Tibial artery (tissue), 4 donors: ENCODE measurements at regions of chr6 and their contacts with region 1.

Region 1: DNA sequence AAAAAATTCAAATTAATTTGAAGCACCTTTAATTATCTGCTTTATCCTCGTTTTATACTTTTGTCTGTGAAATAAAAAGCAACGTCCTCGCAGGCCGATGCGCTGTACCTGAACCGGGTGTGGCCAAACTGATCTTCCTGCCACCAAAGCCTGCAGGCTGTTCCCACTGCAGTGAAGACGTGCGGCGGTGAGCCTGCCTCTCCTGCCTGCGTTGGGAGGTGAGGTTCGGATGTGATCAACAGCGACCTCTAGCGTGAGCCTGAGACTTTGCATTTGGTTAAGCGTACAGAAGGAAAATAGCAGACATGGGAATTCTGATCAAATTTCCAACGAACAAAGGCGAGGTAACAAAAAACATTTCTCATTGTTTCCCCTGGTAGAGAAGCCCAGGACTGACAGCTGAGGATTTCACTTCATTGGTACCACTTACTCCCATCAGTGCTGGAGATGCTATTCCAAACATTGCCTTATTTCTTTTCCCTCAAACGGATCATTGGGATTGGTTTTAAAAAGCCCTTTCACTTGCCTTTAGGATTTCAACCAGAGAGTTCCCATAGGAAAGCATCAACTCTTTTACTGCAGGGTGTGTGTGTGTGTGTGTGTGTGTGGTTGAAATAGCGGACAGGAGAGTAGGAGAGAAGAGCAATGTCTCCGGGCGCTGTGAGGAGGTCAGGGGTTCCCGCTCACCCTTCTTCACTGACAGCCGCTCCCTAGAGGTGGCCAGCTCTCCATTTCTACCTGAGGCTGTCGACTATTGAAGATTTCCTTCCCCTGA is 56.6 kb upstream of the CCN6 start:
- DNase-seq: peak; percentile 79 to 85
- H3K4me3 ChIP-seq: peak overlapping the region; percentile 10 to 28
- H3K27ac ChIP-seq: peak overlapping the region in 1 of 2 donors; percentile 33
- H3K4me1 ChIP-seq: peaks cover 0 to 4% (median 0%) of the 10 kb centered on the region in 4 donors
- H3K27me3 ChIP-seq: peaks cover 0 to 8% of the 10 kb centered on the region in 2 donors
- CTCF ChIP-seq: peak; percentile 85 to 90

Region 2: GRCh38 chr6:111259089-111259831 is 738.0 kb before region 1 on chr6:
- intact Hi-C with region 1: loop called (anchors 5 kb)
- DNase-seq: peak; percentile 99
- H3K4me3 ChIP-seq: peak overlapping the region; percentile 62 to 87
- H3K27ac ChIP-seq: peak overlapping the region; percentile 79 to 85
- H3K4me1 ChIP-seq: peaks cover 0 to 23% (median 14%) of the 10 kb centered on the region in 4 donors
- H3K27me3 ChIP-seq: no peaks in the 10 kb centered on the region
- CTCF ChIP-seq: peak; percentile 95 to 97

Region 3: GRCh38 chr6:111709615-111710398 is 287.5 kb before region 1 on chr6:
- intact Hi-C with region 1: loop called (anchors 5 kb)
- DNase-seq: peak; percentile 68 to 82
- H3K4me3 ChIP-seq: no peak overlapping the region
- H3K27ac ChIP-seq: no peak overlapping the region
- H3K4me1 ChIP-seq: peaks cover 0 to 9% (median 2%) of the 10 kb centered on the region in 4 donors
- H3K27me3 ChIP-seq: no peaks in the 10 kb centered on the region
- CTCF ChIP-seq: peak; percentile 68 to 88

Region 4: GRCh38 chr6:111873178-111874024 is 123.9 kb before region 1 on chr6 and contains the start of gene FYN:
- intact Hi-C with region 1: loop called (anchors 10 kb)
- DNase-seq: peak; percentile 98
- H3K4me3 ChIP-seq: peak within 1 kb of the TSS; percentile 67 to 80
- H3K27ac ChIP-seq: peak within 1 kb of the TSS; percentile 65 to 69
- H3K4me1 ChIP-seq: peaks cover 0 to 20% (median 12%) of the 10 kb centered on the region in 4 donors
- H3K27me3 ChIP-seq: peaks cover 0 to 6% of the 10 kb centered on the region in 2 donors
- CTCF ChIP-seq: peak; percentile 49 to 63

Region 5: GRCh38 chr6:111973118-111973761 is 24.0 kb before region 1 on chr6:
- intact Hi-C with region 1: no loop called
- DNase-seq: peak; percentile 69 to 80
- H3K4me3 ChIP-seq: peak overlapping the region in 1 of 2 donors; percentile 20
- H3K27ac ChIP-seq: peak overlapping the region; percentile 57 to 60
- H3K4me1 ChIP-seq: peaks cover 0 to 13% (median 2%) of the 10 kb centered on the region in 4 donors
- H3K27me3 ChIP-seq: no peaks in the 10 kb centered on the region
- CTCF ChIP-seq: no peak